ENCODE measurements at regions of chr19 and their contacts with region 1.

Region 1: GRCh38 chr19:13880059-13881043 is 3.4 kb downstream of the NANOS3 start:
- DNase-seq: peak; percentile 98
- CTCF ChIP-seq: peak; percentile 95

Region 2: GRCh38 chr19:13833330-13834243 is 46.8 kb before region 1 on chr19:
- CTCF ChIA-PET with region 1: no interaction called
- POLR2A ChIA-PET with region 1: no interaction called
- DNase-seq: peak; percentile 98
- CTCF ChIP-seq: peak; percentile 66

Region 3: DNA sequence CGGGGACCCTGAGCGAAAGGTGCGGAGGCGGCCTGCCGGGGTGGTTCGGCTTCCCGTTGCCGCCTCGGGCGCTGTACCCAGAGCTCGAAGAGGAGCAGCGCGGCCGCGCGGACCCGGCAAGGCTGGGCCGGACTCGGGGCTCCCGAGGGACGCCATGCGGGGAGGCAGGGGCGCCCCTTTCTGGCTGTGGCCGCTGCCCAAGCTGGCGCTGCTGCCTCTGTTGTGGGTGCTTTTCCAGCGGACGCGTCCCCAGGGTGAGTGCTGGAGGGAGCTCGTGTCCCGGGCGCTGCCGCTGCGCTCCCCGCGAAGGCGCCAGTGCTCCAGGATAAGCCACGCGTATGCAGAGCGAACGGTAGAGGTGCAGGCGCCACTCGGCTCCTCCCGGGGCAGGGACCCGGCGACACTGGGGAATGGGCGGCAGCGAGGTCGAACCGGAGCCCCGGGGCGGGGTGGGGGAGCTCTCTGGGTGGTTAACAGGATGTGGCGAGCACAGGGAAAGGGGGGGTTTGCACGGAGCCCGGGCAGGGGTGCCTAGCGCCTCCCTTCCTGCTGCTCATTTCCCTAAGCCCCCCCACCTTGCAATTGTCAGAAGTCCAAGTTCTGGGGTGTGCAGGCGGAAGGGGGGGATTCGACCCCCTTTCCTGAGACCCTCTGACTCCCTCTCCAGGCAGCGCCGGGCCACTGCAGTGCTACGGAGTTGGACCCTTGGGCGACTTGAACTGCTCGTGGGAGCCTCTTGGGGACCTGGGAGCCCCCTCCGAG is 151.5 kb after region 1 on chr19 and contains the start of gene IL27RA:
- CTCF ChIA-PET with region 1: interaction called, 11 read pairs
- POLR2A ChIA-PET with region 1: no interaction called
- DNase-seq: peak; percentile 81
- CTCF ChIP-seq: peak; percentile 85

Region 4: DNA sequence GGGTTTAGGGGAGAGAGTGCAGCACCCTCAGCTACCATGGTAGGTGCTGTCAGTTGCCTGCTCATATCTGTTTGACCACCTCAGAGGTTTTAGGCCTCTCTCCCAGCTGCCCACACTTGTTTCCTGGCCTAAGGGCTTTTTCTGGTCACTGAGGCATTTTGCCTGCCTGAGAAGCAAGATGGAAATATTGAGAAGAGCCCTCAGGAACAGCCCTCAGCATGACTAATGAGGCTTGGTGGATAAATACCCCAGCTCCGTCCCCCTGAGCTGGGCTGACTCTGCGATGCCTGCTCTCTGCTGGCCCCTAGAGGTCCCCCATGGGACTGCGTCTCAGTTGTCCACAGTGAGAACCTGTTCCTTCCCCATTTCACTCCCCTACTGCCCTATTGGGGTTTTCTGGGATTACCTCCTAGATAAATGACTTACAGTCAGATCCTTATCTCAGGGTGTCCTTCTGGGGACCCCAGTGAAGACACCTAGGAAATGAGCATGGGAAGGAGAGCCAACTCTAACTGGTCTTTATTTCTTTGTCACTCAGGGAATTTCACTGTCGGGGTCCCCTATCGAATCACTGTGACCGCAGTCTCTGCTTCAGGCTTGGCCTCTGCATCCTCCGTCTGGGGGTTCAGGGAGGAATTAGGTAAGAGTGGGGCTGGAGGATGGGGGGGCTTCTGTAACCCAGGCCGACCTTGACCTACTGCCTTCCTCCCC is 168.2 kb after region 1 on chr19:
- CTCF ChIA-PET with region 1: interaction called, 28 read pairs
- POLR2A ChIA-PET with region 1: no interaction called
- DNase-seq: peak; percentile 75
- CTCF ChIP-seq: peak; percentile 74

Region 5: DNA sequence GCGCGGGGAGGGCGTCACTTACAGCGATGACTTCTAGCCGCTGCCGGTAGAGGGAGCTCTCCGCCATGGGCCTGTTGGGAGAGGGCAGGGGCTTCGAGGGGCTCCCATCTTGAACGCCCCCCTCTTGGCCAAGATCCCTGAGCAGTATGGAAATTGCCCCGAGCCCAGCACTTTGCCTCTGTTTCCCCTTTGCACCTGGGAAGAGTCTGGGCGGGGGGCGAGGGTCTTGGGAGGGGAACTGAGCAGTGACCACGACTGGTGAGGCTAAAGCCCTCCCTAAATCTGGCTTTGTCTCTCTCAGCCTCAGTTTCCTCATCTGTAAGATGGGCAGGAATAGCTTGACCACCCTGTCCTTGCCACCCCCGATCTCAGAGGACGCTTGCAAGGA is 178.7 kb after region 1 on chr19:
- CTCF ChIA-PET with region 1: interaction called, 38 read pairs
- POLR2A ChIA-PET with region 1: no interaction called
- DNase-seq: peak; percentile 77
- CTCF ChIP-seq: peak; percentile 71

Region 6: DNA sequence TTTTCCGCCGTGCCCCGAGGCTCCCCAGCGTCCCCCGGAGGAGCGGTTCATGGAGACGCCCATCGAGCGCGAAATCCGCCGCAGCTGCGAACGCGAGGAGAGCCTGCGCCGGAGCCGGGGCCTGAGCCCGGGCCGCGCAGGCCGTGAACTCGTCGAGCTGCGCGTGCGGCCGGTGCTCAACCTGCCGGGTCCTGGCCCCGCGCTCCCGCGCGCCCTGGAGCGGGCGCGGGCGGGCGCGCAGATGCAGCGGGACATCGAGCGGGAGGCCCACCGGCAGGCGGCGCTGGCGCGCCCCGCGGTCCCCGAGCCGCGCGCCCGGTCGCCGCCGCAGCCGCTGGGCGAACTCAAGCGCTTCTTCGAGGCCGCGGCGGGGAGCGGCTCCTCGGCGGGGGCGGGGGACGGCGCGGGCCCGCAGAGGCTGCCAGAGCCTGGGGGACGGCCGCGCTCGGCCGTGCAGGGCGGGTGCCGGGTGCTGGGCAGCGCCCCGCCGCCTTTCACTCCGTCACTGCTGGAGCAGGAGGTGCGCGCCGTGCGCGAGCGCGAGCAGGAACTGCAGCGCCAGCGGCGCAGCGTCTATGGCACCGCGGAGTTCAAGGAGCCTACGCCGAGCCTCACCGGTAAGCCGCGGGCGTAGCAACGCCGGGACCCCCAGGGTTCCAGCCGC is 193.0 kb after region 1 on chr19:
- CTCF ChIA-PET with region 1: interaction called, 84 read pairs
- POLR2A ChIA-PET with region 1: no interaction called
- DNase-seq: peak; percentile 83
- CTCF ChIP-seq: peak; percentile 90

Region 7: GRCh38 chr19:14081325-14082093 is 201.2 kb after region 1 on chr19:
- CTCF ChIA-PET with region 1: interaction called, 38 read pairs
- POLR2A ChIA-PET with region 1: no interaction called
- DNase-seq: peak; percentile 98
- CTCF ChIP-seq: no peak

Region 8: GRCh38 chr19:14117668-14118164 is 237.4 kb after region 1 on chr19 and contains the start of gene PRKACA:
- CTCF ChIA-PET with region 1: interaction called, 13 read pairs
- POLR2A ChIA-PET with region 1: no interaction called
- DNase-seq: peak; percentile 99
- CTCF ChIP-seq: no peak

Measured in GM10248 (cell line).